CD4-positive, alpha-beta T cell (primary cell): ENCODE measurements at regions of chr4 and their contacts with region 1.

Region 1: GRCh38 chr4:42673082-42673425 is 16.1 kb upstream of the ATP8A1 start:
- DNase-seq: peak in 3 of 14 experiments; percentile 18 to 28 (median 20)
- ATAC-seq: no peak
- H3K4me3 ChIP-seq: no peak overlapping the region
- H3K4me3 Mint-ChIP-seq: peak overlapping the region; percentile 12
- H3K27ac ChIP-seq: peak overlapping the region in 1 of 2 donors; percentile 75
- H3K27ac Mint-ChIP-seq: peak overlapping the region; percentile 37
- H3K4me1 ChIP-seq: peaks cover 13% of the 10 kb centered on the region
- H3K4me1 Mint-ChIP-seq: peaks cover 36% of the 10 kb centered on the region
- H3K27me3 ChIP-seq: no peaks in the 10 kb centered on the region
- H3K27me3 Mint-ChIP-seq: no peaks in the 10 kb centered on the region
- CTCF ChIP-seq: no peak

Region 2: DNA sequence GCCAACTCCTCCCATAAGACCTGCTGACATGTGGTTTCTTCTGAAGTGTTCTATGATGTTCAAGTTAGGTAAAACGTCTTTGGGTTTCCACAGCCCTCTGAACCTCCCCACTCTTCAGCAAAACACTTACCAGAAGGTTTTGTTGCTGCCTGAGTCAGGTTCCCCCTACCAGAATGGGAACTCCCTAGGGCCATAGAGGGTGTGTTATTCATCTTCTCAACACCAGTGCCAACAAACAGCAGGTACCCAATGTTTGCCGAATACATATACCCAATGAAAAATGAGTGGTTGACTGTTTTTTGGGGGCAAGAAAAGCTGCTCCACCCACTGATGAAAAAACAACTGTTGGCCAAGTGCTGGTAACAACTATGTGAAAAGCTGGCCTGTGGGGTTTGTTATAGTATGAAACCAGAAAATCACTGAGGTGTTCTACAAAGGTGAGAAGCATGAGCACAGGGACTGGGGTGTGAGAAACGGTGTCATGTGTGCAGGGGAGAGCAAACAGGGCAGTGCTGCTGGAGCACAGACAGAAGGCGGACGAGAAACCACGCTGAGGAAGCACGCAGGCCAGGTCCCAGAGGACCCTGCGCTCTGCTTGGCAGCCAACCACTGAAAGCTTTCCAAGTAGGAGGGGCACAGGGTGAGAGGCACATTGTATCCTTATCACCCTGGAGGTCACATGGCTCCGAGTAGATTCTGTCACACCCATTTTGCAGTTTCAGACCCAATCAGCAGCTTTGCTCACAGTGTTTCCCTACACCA is 45.0 kb before region 1 on chr4:
- CTCF ChIA-PET with region 1: no interaction called
- POLR2A ChIA-PET with region 1: interaction called, 4 read pairs
- intact Hi-C with region 1: loop called in 1 of 2 experiments (anchors 5 kb)
- DNase-seq: peak in 13 of 14 experiments; percentile 5 to 82 (median 39)
- ATAC-seq: peak; percentile 90
- H3K4me3 ChIP-seq: no peak overlapping the region
- H3K4me3 Mint-ChIP-seq: peak overlapping the region; percentile 70
- H3K27ac ChIP-seq: peak overlapping the region; percentile 15 to 42
- H3K27ac Mint-ChIP-seq: peak overlapping the region; percentile 92
- H3K4me1 ChIP-seq: peaks cover 25% of the 10 kb centered on the region
- H3K4me1 Mint-ChIP-seq: peaks cover 73% of the 10 kb centered on the region
- H3K27me3 ChIP-seq: no peaks in the 10 kb centered on the region
- H3K27me3 Mint-ChIP-seq: no peaks in the 10 kb centered on the region
- CTCF ChIP-seq: no peak